HCT116 (cell line): ENCODE measurements at regions of chr20 and their contacts with region 1.

Region 1: DNA sequence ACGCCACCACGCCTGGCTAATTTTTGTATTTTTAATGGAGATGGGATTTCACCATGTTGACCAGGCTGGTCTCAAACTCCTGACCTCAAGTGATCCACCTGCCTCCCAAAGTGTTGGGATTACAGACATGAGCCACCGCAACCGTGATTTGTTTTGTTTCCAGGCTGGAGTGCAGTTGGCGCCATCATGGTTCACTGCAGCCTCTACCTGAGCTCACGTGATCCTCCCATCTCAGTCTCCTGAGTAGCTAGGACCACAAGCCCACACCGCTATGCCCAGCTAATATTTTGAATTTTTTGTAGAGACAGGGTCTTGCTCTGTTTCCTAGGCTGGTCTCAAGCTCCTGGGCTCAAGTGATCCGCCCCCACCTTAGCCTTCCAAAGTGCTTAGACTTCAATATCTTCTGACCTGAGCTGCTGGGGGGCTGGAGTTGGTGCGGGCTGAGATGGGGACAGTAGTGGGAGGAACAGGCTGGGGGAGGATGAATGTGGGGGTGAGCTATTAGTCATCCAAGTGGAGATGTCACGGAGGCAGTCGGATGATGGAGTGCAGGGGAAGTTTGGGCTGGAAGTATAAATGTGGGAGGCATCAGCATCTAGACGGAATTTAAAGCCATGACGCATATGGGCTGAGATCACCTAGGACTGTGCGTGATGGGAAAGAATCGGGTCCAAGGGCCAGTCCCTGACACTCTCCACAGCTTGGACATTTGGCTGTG is 23.1 kb upstream of the ZMYND8 start:
- DNase-seq: no peak
- ATAC-seq: no peak
- H3K4me3 ChIP-seq: no peak overlapping the region
- H3K27ac ChIP-seq: no peak overlapping the region
- H3K4me1 ChIP-seq: peaks cover 9 to 11% of the 10 kb centered on the region in 2 experiments
- H3K27me3 ChIP-seq: no peaks in the 10 kb centered on the region
- CTCF ChIP-seq: no peak
- POLR2A ChIP-seq: no peak
- RAD21 ChIP-seq: no peak

Region 2: GRCh38 chr20:46752728-46753127 is 626.9 kb before region 1 on chr20:
- CTCF ChIA-PET with region 1: interaction called, 22 read pairs
- POLR2A ChIA-PET with region 1: no interaction called
- RAD21 ChIA-PET with region 1: interaction called in 1 of 2 experiments, 5 read pairs
- intact Hi-C with region 1: loop called (anchors 5 kb)
- DNase-seq: no peak
- ATAC-seq: peak; percentile 57
- H3K4me3 ChIP-seq: no peak overlapping the region
- H3K27ac ChIP-seq: no peak overlapping the region
- H3K4me1 ChIP-seq: peaks cover 0 to 13% of the 10 kb centered on the region in 2 experiments; a peak in 2 of 4 replicates
- H3K27me3 ChIP-seq: no peaks in the 10 kb centered on the region
- CTCF ChIP-seq: peak; percentile 51 to 77 (median 66); a peak in 5 of 6 replicates
- POLR2A ChIP-seq: no peak
- RAD21 ChIP-seq: peak; percentile 74

Region 3: GRCh38 chr20:47196091-47197081 is 183.2 kb before region 1 on chr20:
- CTCF ChIA-PET with region 1: interaction called, 78 read pairs
- POLR2A ChIA-PET with region 1: interaction called, 4 read pairs
- RAD21 ChIA-PET with region 1: interaction called, 11 to 17 read pairs
- intact Hi-C with region 1: loop called (anchors 1 kb)
- DNase-seq: peak; percentile 62
- ATAC-seq: peak; percentile 75
- H3K4me3 ChIP-seq: no peak overlapping the region
- H3K27ac ChIP-seq: no peak overlapping the region
- H3K4me1 ChIP-seq: peaks cover 16 to 45% of the 10 kb centered on the region in 2 experiments
- H3K27me3 ChIP-seq: no peaks in the 10 kb centered on the region
- CTCF ChIP-seq: peak; percentile 92 to 98 (median 96)
- POLR2A ChIP-seq: no peak
- RAD21 ChIP-seq: peak; percentile 99

Region 4: DNA sequence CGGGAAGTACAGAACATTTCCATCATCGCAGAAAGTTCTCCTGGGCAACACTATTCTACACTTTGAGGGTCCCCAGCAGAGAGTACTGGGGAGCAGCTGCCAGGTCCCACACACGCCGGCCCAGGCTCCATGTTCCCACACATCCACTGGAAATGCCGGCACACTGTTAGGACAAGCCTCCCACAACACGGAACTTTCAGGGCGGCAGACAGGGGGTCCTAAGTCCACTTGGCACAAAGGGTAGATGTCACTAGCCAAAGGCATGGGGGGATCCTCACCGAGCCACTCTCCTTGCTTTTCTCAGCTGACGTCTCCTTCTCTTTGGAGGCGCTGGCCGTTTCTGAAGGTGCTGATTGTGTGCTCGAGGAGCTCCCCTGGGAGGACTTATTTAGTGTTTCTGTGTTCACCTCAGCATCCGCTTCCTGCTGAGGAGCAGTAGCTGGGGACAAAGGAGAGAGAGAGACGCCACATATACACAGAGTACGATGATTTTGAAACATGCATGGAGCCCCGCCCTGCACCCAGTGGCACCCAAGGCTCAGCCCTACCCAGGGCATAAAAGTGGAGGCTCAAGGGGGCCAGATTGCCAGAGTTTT is 158.5 kb before region 1 on chr20:
- CTCF ChIA-PET with region 1: interaction called, 13 read pairs
- POLR2A ChIA-PET with region 1: no interaction called
- RAD21 ChIA-PET with region 1: interaction called in 1 of 2 experiments, 4 read pairs
- intact Hi-C with region 1: no loop called
- DNase-seq: no peak
- ATAC-seq: no peak
- H3K4me3 ChIP-seq: no peak overlapping the region
- H3K27ac ChIP-seq: no peak overlapping the region
- H3K4me1 ChIP-seq: no peaks in the 10 kb centered on the region
- H3K27me3 ChIP-seq: no peaks in the 10 kb centered on the region
- CTCF ChIP-seq: no peak
- POLR2A ChIP-seq: no peak
- RAD21 ChIP-seq: no peak

Region 5: GRCh38 chr20:47278563-47279348 is 100.8 kb before region 1 on chr20:
- CTCF ChIA-PET with region 1: interaction called, 225 read pairs
- POLR2A ChIA-PET with region 1: interaction called, 35 read pairs
- RAD21 ChIA-PET with region 1: interaction called, 27 to 55 read pairs
- intact Hi-C with region 1: loop called (anchors 1 kb)
- DNase-seq: peak; percentile 68
- ATAC-seq: peak; percentile 76
- H3K4me3 ChIP-seq: peak overlapping the region in 1 of 2 experiments; percentile 23; a peak in 2 of 4 replicates
- H3K27ac ChIP-seq: peak overlapping the region; percentile 67
- H3K4me1 ChIP-seq: peaks cover 48 to 59% of the 10 kb centered on the region in 2 experiments
- H3K27me3 ChIP-seq: no peaks in the 10 kb centered on the region
- CTCF ChIP-seq: no peak
- POLR2A ChIP-seq: no peak
- RAD21 ChIP-seq: no peak

Region 6: GRCh38 chr20:47317127-47317895 is 62.3 kb before region 1 on chr20:
- CTCF ChIA-PET with region 1: interaction called, 14 read pairs
- POLR2A ChIA-PET with region 1: interaction called, 9 read pairs
- RAD21 ChIA-PET with region 1: interaction called in 1 of 2 experiments, 3 read pairs
- intact Hi-C with region 1: loop called (anchors 5 kb)
- DNase-seq: peak; percentile 87
- ATAC-seq: peak; percentile 65
- H3K4me3 ChIP-seq: peak overlapping the region; percentile 28 to 51
- H3K27ac ChIP-seq: peak overlapping the region; percentile 92
- H3K4me1 ChIP-seq: peaks cover 81 to 87% of the 10 kb centered on the region in 2 experiments
- H3K27me3 ChIP-seq: no peaks in the 10 kb centered on the region
- CTCF ChIP-seq: no peak
- POLR2A ChIP-seq: no peak
- RAD21 ChIP-seq: no peak

Region 7: DNA sequence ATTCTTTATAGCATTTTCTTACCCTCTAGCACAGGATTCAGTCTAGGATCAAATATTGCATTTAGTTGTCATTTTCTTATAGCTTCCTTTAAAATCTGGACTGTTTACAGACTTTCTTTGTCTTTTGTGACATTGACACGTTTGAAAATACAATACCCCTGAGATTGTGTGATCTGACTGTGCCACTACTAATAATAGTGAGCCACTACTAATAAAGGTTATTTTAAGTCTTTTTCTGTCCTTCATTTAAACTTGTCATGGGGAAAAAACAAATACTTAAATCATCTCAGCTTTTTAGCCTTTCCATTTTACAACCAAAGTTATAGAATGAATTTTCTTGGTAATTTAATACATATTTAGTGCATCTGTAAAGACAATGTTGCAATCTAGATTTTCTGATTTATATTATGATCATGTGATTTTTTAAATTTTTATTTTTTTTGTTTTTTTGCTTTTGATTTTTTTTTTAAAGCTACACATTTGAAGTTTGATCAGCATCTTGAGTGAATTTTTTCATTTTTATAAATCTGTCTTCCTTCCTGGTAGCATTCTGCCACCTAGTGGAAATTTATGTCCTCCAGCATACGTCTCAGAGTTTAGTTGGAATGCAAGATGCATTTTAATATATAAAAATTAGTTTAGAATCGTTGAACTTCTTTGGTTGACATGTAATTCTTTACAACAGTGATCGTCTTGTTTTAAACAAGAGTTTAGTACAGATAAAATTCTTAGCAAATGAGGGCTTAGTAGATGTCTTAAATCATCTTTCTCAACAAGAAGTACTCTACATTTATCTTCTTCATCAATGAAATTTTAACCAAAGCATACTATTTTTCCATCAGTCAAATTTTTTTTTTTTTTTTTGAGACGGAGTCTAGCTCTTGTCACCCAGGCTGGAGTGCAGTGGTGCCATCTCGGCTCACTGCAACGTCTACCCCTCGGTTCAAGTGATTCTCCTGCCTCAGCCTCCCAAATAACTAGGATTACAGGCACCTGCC is 241.5 kb after region 1 on chr20:
- CTCF ChIA-PET with region 1: interaction called, 36 read pairs
- POLR2A ChIA-PET with region 1: no interaction called
- RAD21 ChIA-PET with region 1: no interaction called
- intact Hi-C with region 1: loop called (anchors 2 kb)
- DNase-seq: peak; percentile 51
- ATAC-seq: no peak
- H3K4me3 ChIP-seq: no peak overlapping the region
- H3K27ac ChIP-seq: no peak overlapping the region
- H3K4me1 ChIP-seq: peaks cover 0 to 6% of the 10 kb centered on the region in 2 experiments; a peak in 2 of 4 replicates
- H3K27me3 ChIP-seq: no peaks in the 10 kb centered on the region
- CTCF ChIP-seq: peak; percentile 66 to 79 (median 73); a peak in 5 of 6 replicates
- POLR2A ChIP-seq: no peak
- RAD21 ChIP-seq: peak; percentile 83